Calu3 (cell line): ENCODE measurements at regions of chr7 and their contacts with region 1.

Region 1: GRCh38 chr7:51141451-51142003 is 175.1 kb downstream of the COBL start:
- DNase-seq: peak; percentile 56
- H3K4me3 Mint-ChIP-seq: no peak overlapping the region
- H3K27ac Mint-ChIP-seq: peak overlapping the region; percentile 70
- H3K4me1 Mint-ChIP-seq: peaks cover 53% of the 10 kb centered on the region
- H3K27me3 Mint-ChIP-seq: no peaks in the 10 kb centered on the region
- CTCF ChIP-seq: peak; percentile 72

Region 2: GRCh38 chr7:50467817-50468610 is 673.5 kb before region 1 on chr7:
- CTCF ChIA-PET with region 1: interaction called, 18 read pairs
- intact Hi-C with region 1: loop called (anchors 1 kb)
- DNase-seq: peak; percentile 93
- H3K4me3 Mint-ChIP-seq: peak overlapping the region; percentile 25
- H3K27ac Mint-ChIP-seq: peak overlapping the region; percentile 13
- H3K4me1 Mint-ChIP-seq: no peaks in the 10 kb centered on the region
- H3K27me3 Mint-ChIP-seq: no peaks in the 10 kb centered on the region
- CTCF ChIP-seq: peak; percentile 96

Region 3: GRCh38 chr7:50696810-50697582 is 444.5 kb before region 1 on chr7:
- CTCF ChIA-PET with region 1: no interaction called
- intact Hi-C with region 1: loop called (anchors 1 kb)
- DNase-seq: peak; percentile 38
- H3K4me3 Mint-ChIP-seq: no peak overlapping the region
- H3K27ac Mint-ChIP-seq: peak overlapping the region; percentile 16
- H3K4me1 Mint-ChIP-seq: peaks cover 15% of the 10 kb centered on the region
- H3K27me3 Mint-ChIP-seq: no peaks in the 10 kb centered on the region
- CTCF ChIP-seq: peak; percentile 79

Region 4: DNA sequence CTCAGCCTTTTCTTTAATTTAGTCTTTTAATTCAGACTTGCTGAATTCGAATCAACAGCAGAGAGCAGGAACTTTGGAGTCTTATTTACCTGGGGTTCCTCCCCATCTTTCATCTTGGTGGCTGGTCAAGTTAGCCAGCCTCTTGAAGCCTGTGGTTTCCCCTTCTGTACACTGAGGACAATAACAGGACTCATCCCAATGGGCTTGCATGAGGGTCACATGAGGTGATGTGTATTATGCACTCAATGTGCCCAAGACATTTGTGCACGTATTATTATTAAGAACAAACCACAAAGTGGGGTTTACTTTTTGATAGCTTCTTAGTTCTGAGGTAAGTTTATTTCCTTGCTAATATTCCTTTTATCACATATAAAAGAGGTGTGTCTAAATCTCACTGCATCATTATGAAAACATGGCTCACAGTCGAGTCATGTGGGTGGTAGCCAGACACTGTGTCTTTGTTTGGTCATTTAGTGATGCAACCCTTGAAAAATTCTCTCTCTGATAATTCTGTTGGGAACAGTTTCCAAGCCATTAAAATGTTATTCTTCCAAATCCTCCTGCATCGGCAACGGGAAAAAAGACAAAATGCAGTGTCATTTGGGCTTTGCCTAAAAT is 272.3 kb before region 1 on chr7:
- CTCF ChIA-PET with region 1: no interaction called
- intact Hi-C with region 1: loop called (anchors 2 kb)
- DNase-seq: peak; percentile 72
- H3K4me3 Mint-ChIP-seq: peak overlapping the region; percentile 51
- H3K27ac Mint-ChIP-seq: peak overlapping the region; percentile 99
- H3K4me1 Mint-ChIP-seq: peaks cover 58% of the 10 kb centered on the region
- H3K27me3 Mint-ChIP-seq: no peaks in the 10 kb centered on the region
- CTCF ChIP-seq: no peak

Region 5: GRCh38 chr7:51067757-51068156 is 73.8 kb before region 1 on chr7:
- CTCF ChIA-PET with region 1: interaction called, 8 read pairs
- intact Hi-C with region 1: loop called (anchors 2 kb)
- DNase-seq: peak; percentile 86
- H3K4me3 Mint-ChIP-seq: no peak overlapping the region
- H3K27ac Mint-ChIP-seq: no peak overlapping the region
- H3K4me1 Mint-ChIP-seq: peaks cover 62% of the 10 kb centered on the region
- H3K27me3 Mint-ChIP-seq: no peaks in the 10 kb centered on the region
- CTCF ChIP-seq: peak; percentile 96